Left colon (tissue), 2 donors: ENCODE measurements at regions of chr10 and their contacts with region 1.

Region 1: GRCh38 chr10:6416892-6417512 is 163.1 kb downstream of the PRKCQ start:
- DNase-seq: no peak
- ATAC-seq: peak; percentile 62

Region 2: GRCh38 chr10:5960070-5960972 is 456.7 kb before region 1 on chr10:
- intact Hi-C with region 1: no loop called
- DNase-seq: peak in 1 of 2 donors; percentile 22
- ATAC-seq: no peak

Region 3: GRCh38 chr10:6667679-6668270 is 250.8 kb after region 1 on chr10:
- intact Hi-C with region 1: loop called in 1 of 2 experiments (anchors 5 kb)
- DNase-seq: peak in 1 of 2 donors; percentile 21
- ATAC-seq: peak; percentile 34